Activated T-helper 1 cell treated with anti-CD3 and anti-CD28 coated beads, Interleukin-12 subunit alpha, Interleukin-12 subunit beta, Interleukin-2, Interleukin-4 antibody, amounts not matched to agents 30 ng/mL and 10 ng/mL and 1 ng/mL, durations not matched to agents 14 hours and 24 hours and 36 hours (primary cell): ENCODE measurements at regions of chr2 and their contacts with region 1.

Region 1: DNA sequence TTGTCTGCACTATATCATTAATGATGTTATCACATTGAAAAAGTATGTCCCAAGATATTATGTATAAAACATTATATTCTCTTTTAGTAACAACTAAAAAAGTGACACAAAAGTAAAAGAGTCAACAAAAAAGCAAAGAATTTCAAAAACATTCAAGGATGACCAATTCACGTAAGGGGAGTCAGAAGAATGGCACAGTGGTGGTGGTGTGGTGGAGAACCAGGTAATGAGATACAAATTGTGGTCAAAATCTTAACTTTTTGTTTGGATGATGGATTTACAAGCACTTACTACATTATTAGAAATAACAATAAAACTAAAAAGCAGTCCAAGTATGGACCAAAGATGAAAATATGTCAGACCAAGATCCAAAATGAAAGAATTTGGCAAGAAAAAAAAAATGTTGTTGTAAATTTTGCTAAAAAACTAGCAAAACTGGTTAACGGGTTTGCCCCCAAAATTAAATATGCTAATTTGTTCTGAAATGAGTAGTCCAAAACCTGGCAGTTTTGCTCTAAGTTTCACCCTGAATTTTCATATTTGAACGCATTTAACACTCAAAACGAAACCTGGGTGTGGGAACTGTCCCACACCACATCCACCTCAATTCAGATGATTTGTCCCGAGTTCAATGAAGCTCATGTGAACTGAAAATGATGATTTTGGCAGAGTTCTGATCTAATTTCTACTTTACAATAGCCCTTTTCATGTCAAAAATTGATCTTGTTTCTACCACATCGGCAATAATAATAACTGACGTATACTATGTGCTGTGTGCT is 135.8 kb downstream of the IKZF2 start:
- DNase-seq: peak; percentile 37
- H3K4me3 Mint-ChIP-seq: no peak overlapping the region
- H3K27ac Mint-ChIP-seq: peak overlapping the region; percentile 45
- H3K4me1 Mint-ChIP-seq: peaks cover 37% of the 10 kb centered on the region
- H3K27me3 Mint-ChIP-seq: peaks cover 20% of the 10 kb centered on the region

Region 2: DNA sequence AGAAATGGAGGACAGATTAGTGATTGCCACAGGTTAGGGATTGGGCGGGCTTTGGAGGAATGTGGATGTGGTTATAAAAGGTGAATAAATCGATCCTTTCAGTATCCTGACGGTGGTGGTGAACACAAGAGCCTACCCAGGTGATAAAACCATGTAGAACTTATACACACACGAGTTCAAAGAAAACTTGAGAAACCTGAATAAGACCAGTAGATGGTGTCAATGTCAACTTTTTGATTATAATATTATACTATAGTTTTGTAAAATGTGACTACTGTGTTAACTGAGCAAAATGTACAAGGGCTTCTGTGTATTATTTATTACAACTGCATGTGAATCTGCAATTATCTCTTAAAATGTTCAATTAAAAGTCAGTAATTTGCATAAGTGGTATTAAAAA is 613.3 kb before region 1 on chr2:
- intact Hi-C with region 1: no loop called
- DNase-seq: no peak
- H3K4me3 Mint-ChIP-seq: no peak overlapping the region
- H3K27ac Mint-ChIP-seq: no peak overlapping the region
- H3K4me1 Mint-ChIP-seq: no peaks in the 10 kb centered on the region
- H3K27me3 Mint-ChIP-seq: no peaks in the 10 kb centered on the region

Region 3: DNA sequence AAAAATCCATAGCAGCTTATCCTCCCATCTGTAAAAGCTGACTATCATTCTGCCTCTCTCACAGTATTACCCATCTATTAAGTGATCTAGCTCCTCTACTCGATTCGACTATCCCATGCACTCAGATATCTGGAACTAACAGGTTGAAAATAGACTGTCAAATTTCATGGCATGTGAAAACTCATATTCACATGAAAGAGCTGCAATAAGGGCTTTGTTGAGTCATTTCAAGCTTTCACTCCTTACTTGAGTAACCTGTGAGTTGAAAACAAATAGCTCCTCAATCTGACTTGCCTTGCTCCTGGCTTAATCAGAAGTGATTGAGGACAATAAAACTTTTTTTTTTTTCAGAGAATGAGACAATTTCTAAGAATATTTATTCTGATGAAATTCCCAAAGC is 284.6 kb before region 1 on chr2:
- intact Hi-C with region 1: loop called (anchors 5 kb)
- DNase-seq: no peak
- H3K4me3 Mint-ChIP-seq: no peak overlapping the region
- H3K27ac Mint-ChIP-seq: no peak overlapping the region
- H3K4me1 Mint-ChIP-seq: peaks cover 5% of the 10 kb centered on the region
- H3K27me3 Mint-ChIP-seq: no peaks in the 10 kb centered on the region

Region 4: DNA sequence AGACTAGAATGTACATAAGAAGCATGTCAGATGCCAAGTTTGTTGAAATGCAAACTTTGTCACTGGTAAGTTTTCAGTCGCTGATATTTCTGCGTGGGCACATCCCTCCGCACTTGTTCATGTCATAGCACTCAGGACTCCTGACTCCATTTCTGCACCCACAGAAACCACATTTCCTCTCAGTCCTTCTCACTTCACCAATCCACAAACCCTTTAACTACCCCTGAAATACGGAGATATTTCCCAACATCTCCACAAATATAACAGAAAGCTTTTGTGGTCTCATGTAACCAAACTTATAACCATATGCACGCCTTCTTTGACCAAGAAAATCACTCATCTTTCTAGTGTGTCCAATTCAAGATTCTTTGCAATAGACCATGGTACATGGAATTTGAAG is 200.1 kb before region 1 on chr2:
- intact Hi-C with region 1: loop called (anchors 2 kb)
- DNase-seq: no peak
- H3K4me3 Mint-ChIP-seq: no peak overlapping the region
- H3K27ac Mint-ChIP-seq: peak overlapping the region; percentile 38
- H3K4me1 Mint-ChIP-seq: peaks cover 6% of the 10 kb centered on the region
- H3K27me3 Mint-ChIP-seq: peaks cover 4% of the 10 kb centered on the region

Region 5: DNA sequence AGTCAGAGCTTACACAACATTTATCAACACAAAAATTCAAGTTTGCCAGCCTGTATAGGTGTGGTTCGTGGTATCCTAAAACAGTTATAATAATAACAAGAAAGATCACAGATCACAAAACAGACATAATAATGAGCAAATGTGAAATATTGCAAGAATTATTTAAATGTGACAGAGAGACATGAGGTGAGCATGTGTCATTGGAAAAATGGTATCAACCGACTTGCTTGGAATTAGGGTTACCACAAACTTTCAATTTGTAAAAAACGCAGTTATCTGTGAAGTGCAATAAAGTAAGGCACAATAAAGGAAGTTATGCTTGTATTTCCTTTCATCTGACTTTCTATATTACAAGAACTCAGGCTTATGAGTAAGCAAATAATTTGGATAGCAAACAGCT is 19.0 kb after region 1 on chr2:
- intact Hi-C with region 1: loop called (anchors 2 kb)
- DNase-seq: no peak
- H3K4me3 Mint-ChIP-seq: no peak overlapping the region
- H3K27ac Mint-ChIP-seq: no peak overlapping the region
- H3K4me1 Mint-ChIP-seq: no peaks in the 10 kb centered on the region
- H3K27me3 Mint-ChIP-seq: no peaks in the 10 kb centered on the region

Region 6: GRCh38 chr2:213151437-213152064 is 136.0 kb after region 1 on chr2 and contains the start of gene IKZF2:
- intact Hi-C with region 1: loop called (anchors 1 kb)
- DNase-seq: peak; percentile 57
- H3K4me3 Mint-ChIP-seq: peak within 1 kb of the TSS; percentile 87
- H3K27ac Mint-ChIP-seq: peak within 1 kb of the TSS; percentile 81
- H3K4me1 Mint-ChIP-seq: peaks cover 31% of the 10 kb centered on the region
- H3K27me3 Mint-ChIP-seq: peaks cover 40% of the 10 kb centered on the region
- total RNA-seq, gene IKZF2: 2.8 and 3.2 TPM in 2 replicates